ENCODE measurements at regions of chr5 and their contacts with region 1.

Region 1: GRCh38 chr5:169577951-169578350 is 5.6 kb upstream of the SPDL1 start:
- DNase-seq: no peak
- ATAC-seq: no peak
- H3K4me3 ChIP-seq: no peak overlapping the region
- H3K27ac ChIP-seq: no peak overlapping the region
- H3K4me1 ChIP-seq: peaks cover 2% of the 10 kb centered on the region; the same call in 1 of the 2 replicates
- H3K27me3 ChIP-seq: peaks cover 4% of the 10 kb centered on the region
- CTCF ChIP-seq: peak; percentile 35
- POLR2A ChIP-seq: no peak
- RAD21 ChIP-seq: peak; percentile 30

Region 2: GRCh38 chr5:169318556-169318955 is 259.4 kb before region 1 on chr5:
- CTCF ChIA-PET with region 1: no interaction called
- POLR2A ChIA-PET with region 1: no interaction called
- dilution Hi-C with region 1: no loop called
- in situ Hi-C with region 1: no loop called
- intact Hi-C with region 1: loop called (anchors 10 kb)
- DNase-seq: no peak
- ATAC-seq: no peak
- H3K4me3 ChIP-seq: no peak overlapping the region
- H3K27ac ChIP-seq: no peak overlapping the region
- H3K4me1 ChIP-seq: no peaks in the 10 kb centered on the region
- H3K27me3 ChIP-seq: no peaks in the 10 kb centered on the region
- CTCF ChIP-seq: no peak
- POLR2A ChIP-seq: no peak
- RAD21 ChIP-seq: no peak

Region 3: DNA sequence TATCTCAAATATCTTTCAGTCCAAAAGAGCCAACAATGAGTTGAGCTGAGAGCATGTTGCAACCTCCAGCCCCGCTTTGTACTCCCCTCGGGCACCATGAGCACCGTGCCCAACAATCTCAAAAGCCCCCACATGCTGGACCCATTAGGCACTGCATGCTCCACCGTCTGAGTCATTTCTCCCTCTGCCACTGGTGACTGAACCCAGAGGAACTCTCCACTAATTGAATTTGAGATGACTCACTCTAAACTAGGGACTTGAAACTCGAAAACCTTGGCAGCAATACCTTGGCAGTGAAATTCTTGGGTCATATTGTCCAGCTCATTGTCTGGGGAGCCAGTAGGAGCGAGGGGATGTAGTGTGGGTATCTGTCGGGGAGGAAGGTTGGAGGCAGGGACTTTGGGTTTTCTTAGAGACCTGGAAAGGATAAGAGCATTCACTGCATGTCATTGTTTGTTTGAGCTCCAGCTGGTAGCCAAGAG is 227.2 kb before region 1 on chr5:
- CTCF ChIA-PET with region 1: no interaction called
- POLR2A ChIA-PET with region 1: no interaction called
- dilution Hi-C with region 1: no loop called
- in situ Hi-C with region 1: no loop called
- intact Hi-C with region 1: loop called (anchors 5 kb)
- DNase-seq: peak; percentile 89
- ATAC-seq: peak; percentile 91
- H3K4me3 ChIP-seq: no peak overlapping the region
- H3K27ac ChIP-seq: no peak overlapping the region
- H3K4me1 ChIP-seq: no peaks in the 10 kb centered on the region
- H3K27me3 ChIP-seq: no peaks in the 10 kb centered on the region
- CTCF ChIP-seq: no peak
- POLR2A ChIP-seq: no peak
- RAD21 ChIP-seq: no peak